Esophagus muscularis mucosa (tissue), 4 donors: ENCODE measurements at regions of chr12 and their contacts with region 1.

Region 1: DNA sequence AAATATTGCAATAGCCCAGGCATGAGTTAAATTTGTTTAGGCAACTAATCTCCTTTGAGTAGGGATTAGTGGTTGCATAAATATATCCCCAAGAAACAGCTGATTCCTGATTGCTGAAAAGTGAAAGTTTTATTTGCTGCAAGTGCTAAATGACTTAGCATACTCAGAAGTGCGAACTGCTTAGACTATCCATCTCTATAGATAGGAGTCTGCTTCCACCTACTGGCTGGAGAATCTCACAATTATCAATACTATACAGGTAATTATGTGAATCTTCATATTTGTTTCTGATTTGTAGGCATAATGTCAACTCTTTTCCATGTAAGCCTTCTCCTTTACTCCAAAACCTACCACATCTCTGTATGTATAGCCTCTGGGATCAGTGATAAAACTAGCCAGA is 11.9 kb upstream of the SLCO1B3 start:
- DNase-seq: no peak
- H3K4me3 ChIP-seq: no peak overlapping the region
- H3K27ac ChIP-seq: no peak overlapping the region
- H3K4me1 ChIP-seq: peaks cover 2 to 12% (median 6%) of the 10 kb centered on the region in 4 donors
- H3K27me3 ChIP-seq: no peaks in the 10 kb centered on the region
- CTCF ChIP-seq: peak; percentile 34 to 50 (median 47)
- EP300 ChIP-seq: no peak
- POLR2A ChIP-seq: no peak

Region 2: GRCh38 chr12:20646239-20646827 is 152.2 kb before region 1 on chr12:
- intact Hi-C with region 1: loop called (anchors 10 kb)
- DNase-seq: no peak
- H3K4me3 ChIP-seq: no peak overlapping the region
- H3K27ac ChIP-seq: no peak overlapping the region
- H3K4me1 ChIP-seq: peaks cover 0 to 15% (median 10%) of the 10 kb centered on the region in 4 donors
- H3K27me3 ChIP-seq: no peaks in the 10 kb centered on the region
- CTCF ChIP-seq: peak; percentile 36 to 60 (median 53)
- EP300 ChIP-seq: no peak
- POLR2A ChIP-seq: no peak

Region 3: GRCh38 chr12:20883288-20883687 is 84.7 kb after region 1 on chr12:
- intact Hi-C with region 1: no loop called
- DNase-seq: no peak
- H3K4me3 ChIP-seq: no peak overlapping the region
- H3K27ac ChIP-seq: peak overlapping the region in 2 of 4 donors; percentile 51 to 53
- H3K4me1 ChIP-seq: peaks cover 0 to 23% (median 20%) of the 10 kb centered on the region in 4 donors
- H3K27me3 ChIP-seq: no peaks in the 10 kb centered on the region
- CTCF ChIP-seq: no peak
- EP300 ChIP-seq: no peak
- POLR2A ChIP-seq: no peak